Heart left ventricle (tissue), 16 donors: ENCODE measurements at regions of chr2 and their contacts with region 1.

Region 1: GRCh38 chr2:86079981-86080911 is 25.4 kb downstream of the POLR1A start:
- DNase-seq: peak; percentile 73 to 91 (median 80)
- ATAC-seq: peak; percentile 71 to 92 (median 80)
- H3K4me3 ChIP-seq: no peak overlapping the region
- H3K27ac ChIP-seq: peak overlapping the region in 1 of 12 donors; percentile 53
- H3K4me1 ChIP-seq: peaks cover 0 to 28% (median 9%) of the 10 kb centered on the region in 12 donors
- H3K27me3 ChIP-seq: no peaks in the 10 kb centered on the region
- CTCF ChIP-seq: peak; percentile 71 to 88 (median 80)
- POLR2A ChIP-seq: no peak

Region 2: DNA sequence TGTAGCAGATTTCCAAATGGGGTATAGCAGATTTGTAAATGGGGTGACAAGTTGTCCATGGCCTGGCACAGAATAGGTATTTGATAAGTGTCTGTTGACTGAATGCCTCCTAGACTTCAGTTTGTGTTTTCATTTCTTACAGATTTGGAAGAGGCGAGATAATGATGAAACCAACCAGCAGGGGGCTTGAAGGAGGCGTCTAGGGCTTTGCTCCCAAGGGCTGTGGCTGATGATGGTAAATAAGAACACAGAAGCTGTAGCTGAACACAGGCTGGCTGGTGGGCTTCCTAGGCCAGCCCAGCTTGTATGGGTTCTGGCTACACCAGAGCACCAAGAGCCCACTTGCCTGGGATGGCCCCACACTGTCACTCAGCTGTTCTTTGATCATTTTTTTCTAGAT is 431.6 kb before region 1 on chr2:
- intact Hi-C with region 1: loop called in 1 of 10 experiments (anchors 10 kb)
- DNase-seq: peak in 1 of 5 donors; percentile 37
- ATAC-seq: peak in 3 of 4 donors; percentile 35 to 60 (median 38)
- H3K4me3 ChIP-seq: no peak overlapping the region
- H3K27ac ChIP-seq: peak overlapping the region in 8 of 12 donors; percentile 13 to 68 (median 46)
- H3K4me1 ChIP-seq: peaks cover 0 to 16% (median 11%) of the 10 kb centered on the region in 12 donors
- H3K27me3 ChIP-seq: no peaks in the 10 kb centered on the region
- CTCF ChIP-seq: peak; percentile 8 to 56 (median 42)
- POLR2A ChIP-seq: no peak

Region 3: DNA sequence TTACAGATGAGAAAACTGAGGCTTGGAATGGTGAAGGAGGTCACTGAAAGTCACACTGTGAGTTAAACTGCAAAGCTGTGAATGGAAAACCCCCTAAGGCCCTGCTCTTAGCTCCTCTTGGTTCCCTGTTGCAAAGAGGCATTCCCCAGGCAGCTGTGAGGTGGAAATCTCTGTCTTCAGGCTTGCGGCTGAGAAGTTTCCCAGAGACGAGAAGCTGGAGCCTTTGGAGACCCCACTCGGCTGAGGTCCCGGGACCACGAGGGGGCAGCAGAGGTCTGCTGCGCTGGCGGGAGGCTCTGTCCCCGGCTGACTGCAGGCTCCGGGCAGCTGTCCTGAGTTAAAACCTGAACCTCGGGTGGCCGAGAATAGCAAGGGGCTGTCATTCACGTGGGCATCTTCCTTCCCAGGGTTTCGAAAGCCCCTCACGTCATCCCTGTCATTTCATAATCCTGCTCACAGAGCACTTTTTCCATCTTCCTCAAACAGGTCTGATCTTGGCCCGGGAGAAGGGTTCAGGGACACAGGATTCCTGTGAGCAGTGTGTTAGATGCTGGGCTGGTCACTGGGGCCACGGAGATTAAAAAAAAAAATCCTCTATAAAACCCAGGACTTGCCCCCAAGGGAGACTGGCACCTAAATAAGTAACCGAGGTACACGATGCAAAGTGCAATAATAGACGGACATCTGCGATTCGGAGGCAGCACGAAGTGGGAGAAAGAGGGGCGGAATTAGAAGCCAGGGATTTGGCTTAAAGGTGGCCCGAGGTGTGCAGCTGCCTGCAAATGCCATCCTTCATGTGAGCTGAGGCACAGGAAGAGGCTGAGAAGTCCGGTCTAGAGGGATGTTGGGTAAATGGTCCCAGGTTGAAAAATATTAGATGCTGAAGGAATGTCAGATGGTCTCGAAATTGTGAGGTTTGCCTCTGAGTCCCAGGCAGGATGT is 351.1 kb before region 1 on chr2:
- intact Hi-C with region 1: loop called in 6 of 10 experiments (anchors 2 to 10 kb)
- DNase-seq: peak; percentile 89 to 95 (median 90)
- ATAC-seq: peak; percentile 89 to 95 (median 94)
- H3K4me3 ChIP-seq: no peak overlapping the region
- H3K27ac ChIP-seq: peak overlapping the region in 9 of 12 donors; percentile 15 to 71 (median 52)
- H3K4me1 ChIP-seq: peaks cover 0 to 47% (median 32%) of the 10 kb centered on the region in 12 donors
- H3K27me3 ChIP-seq: no peaks in the 10 kb centered on the region
- CTCF ChIP-seq: peak; percentile 90 to 99 (median 98)
- POLR2A ChIP-seq: no peak

Region 4: GRCh38 chr2:85826990-85827878 is 253.0 kb before region 1 on chr2:
- intact Hi-C with region 1: loop called (anchors 1 to 2 kb)
- DNase-seq: peak; percentile 57 to 89 (median 66)
- ATAC-seq: peak; percentile 77 to 96 (median 94)
- H3K4me3 ChIP-seq: peak overlapping the region in 4 of 12 donors; percentile 17 to 24 (median 20)
- H3K27ac ChIP-seq: no peak overlapping the region
- H3K4me1 ChIP-seq: peaks cover 0 to 9% (median 5%) of the 10 kb centered on the region in 12 donors
- H3K27me3 ChIP-seq: no peaks in the 10 kb centered on the region
- CTCF ChIP-seq: peak; percentile 83 to 97 (median 92)
- POLR2A ChIP-seq: no peak